T-cell (primary cell): ENCODE measurements at regions of chr19 and their contacts with region 1.

Region 1: DNA sequence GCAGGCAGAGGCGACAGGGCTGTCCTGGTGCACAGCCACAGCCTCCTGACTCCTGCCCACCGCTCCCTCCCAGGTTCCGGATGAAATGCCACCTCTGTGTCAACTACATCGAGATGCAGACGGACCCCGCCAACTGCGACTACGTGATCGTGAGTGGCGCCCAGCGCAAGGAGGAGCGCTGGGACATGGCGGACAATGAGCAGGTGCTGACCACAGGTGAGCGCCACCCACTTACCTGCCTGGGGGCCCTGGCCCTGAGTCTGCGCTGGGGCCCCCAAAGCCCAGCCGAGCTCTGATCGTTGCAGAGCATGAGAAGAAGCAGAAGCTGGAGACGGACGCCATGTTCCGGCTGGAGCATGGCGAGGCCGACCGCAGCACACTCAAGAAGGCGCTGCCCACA is 5.5 kb upstream of the MRI1 start:
- DNase-seq: no peak
- ATAC-seq: no peak
- H3K4me3 ChIP-seq: no peak overlapping the region
- H3K4me3 Mint-ChIP-seq: no peak overlapping the region
- H3K27ac ChIP-seq: no peak overlapping the region
- H3K27ac Mint-ChIP-seq: no peak overlapping the region
- H3K4me1 ChIP-seq: peaks cover 0 to 8% of the 10 kb centered on the region in 2 experiments
- H3K4me1 Mint-ChIP-seq: peaks cover 0 to 6% (median 5%) of the 10 kb centered on the region in 3 donors
- H3K27me3 ChIP-seq: no peaks in the 10 kb centered on the region
- H3K27me3 Mint-ChIP-seq: no peaks in the 10 kb centered on the region

Region 2: GRCh38 chr19:14117668-14118164 is 358.9 kb after region 1 on chr19 and contains the start of gene PRKACA:
- CTCF ChIA-PET with region 1: no interaction called
- POLR2A ChIA-PET with region 1: no interaction called
- DNase-seq: peak; percentile 93 to 99 (median 97)
- ATAC-seq: peak; percentile 87 to 95 (median 95)
- H3K4me3 ChIP-seq: peak within 1 kb of the TSS; percentile 74 to 78
- H3K4me3 Mint-ChIP-seq: peak within 1 kb of the TSS; percentile 88 to 96 (median 92)
- H3K27ac ChIP-seq: peak within 1 kb of the TSS; percentile 76
- H3K27ac Mint-ChIP-seq: peak within 1 kb of the TSS; percentile 87 to 89
- H3K4me1 ChIP-seq: peaks cover 26 to 50% of the 10 kb centered on the region in 2 experiments
- H3K4me1 Mint-ChIP-seq: peaks cover 40 to 47% (median 46%) of the 10 kb centered on the region in 3 donors
- H3K27me3 ChIP-seq: no peaks in the 10 kb centered on the region
- H3K27me3 Mint-ChIP-seq: no peaks in the 10 kb centered on the region
- total RNA-seq, gene PRKACA: 43.0 to 53.5 (median 48.9) TPM

Region 3: DNA sequence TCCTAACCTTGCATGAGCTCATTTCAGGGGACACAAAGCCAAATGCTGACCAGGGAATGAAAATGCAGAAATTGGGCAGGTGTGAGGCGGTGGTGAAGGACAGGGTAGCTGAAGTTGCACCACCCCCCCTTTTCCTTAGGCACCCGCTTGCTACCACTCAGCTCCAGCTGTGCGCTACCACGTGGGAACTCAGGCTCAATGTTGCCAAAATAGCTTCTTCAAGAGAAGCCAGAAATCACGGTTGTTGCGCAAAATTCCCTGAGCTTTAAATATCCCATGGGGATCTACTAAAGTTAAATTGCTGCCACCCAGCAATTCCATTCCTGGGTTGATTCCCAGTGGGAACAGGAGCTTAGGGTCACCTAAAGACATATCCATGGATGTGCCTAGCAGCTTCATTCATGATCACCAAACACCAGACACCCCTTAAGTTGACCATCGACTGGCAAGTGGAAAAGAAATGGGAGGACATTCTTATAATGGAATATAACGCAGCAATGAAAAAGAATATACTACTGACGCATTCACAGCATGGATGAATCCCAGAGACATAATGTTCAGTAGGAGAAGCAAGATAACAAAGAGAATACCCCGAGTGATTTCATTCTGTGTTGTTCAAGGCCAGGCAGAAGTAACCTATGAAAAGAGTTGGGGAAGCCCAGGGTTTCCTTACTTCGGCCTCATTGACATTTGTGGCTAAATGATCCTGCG is 460.0 kb after region 1 on chr19:
- CTCF ChIA-PET with region 1: interaction called in 1 of 2 experiments, 10 read pairs
- POLR2A ChIA-PET with region 1: no interaction called
- DNase-seq: no peak
- ATAC-seq: no peak
- H3K4me3 ChIP-seq: no peak overlapping the region
- H3K4me3 Mint-ChIP-seq: no peak overlapping the region
- H3K27ac ChIP-seq: no peak overlapping the region
- H3K27ac Mint-ChIP-seq: no peak overlapping the region
- H3K4me1 ChIP-seq: peaks cover 0 to 19% of the 10 kb centered on the region in 2 experiments
- H3K4me1 Mint-ChIP-seq: peaks cover 12 to 21% (median 15%) of the 10 kb centered on the region in 3 donors
- H3K27me3 ChIP-seq: no peaks in the 10 kb centered on the region
- H3K27me3 Mint-ChIP-seq: no peaks in the 10 kb centered on the region